KBM-7 (cell line): ENCODE measurements at regions of chr16 and their contacts with region 1.

Region 1: GRCh38 chr16:29678691-29679267 is at the start of gene QPRT:
- DNase-seq: peak; percentile 73

Region 2: DNA sequence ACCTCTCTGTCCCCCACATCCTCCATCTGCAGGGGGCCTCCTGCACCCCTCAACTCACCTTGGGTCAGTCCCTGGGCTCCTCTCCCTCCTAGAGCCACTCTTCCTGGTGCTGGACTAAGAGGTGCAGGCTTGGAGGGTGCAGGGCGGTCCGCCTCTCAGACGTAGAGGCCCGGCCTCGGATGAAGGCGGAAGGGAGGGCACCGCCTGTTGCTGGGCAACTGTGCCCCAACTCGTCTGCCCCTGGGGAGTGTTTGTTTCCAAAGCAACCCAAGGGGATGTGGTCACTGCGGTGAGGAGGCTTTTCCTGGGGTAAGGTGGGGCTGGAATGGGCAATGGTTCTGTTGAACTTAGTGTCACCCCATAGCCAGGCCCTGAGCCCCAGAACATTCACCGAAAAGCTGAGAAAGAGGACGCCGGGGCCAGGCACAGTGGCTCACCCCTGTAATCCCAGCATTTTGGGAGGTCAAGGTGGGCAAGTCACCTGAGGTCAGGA is 67.1 kb after region 1 on chr16 and contains the start of gene C16orf54:
- in situ Hi-C with region 1: no loop called
- DNase-seq: peak; percentile 96

Region 3: GRCh38 chr16:30005341-30006094 is 326.7 kb after region 1 on chr16:
- in situ Hi-C with region 1: loop called (anchors 25 kb)
- DNase-seq: peak; percentile 35